ENCODE measurements at regions of chr5 and their contacts with region 1.

Region 1: GRCh38 chr5:150217873-150218692 is 28.2 kb downstream of the SLC6A7 start:
- DNase-seq: peak; percentile 67 to 73 (median 71)
- H3K4me3 ChIP-seq: no peak overlapping the region
- H3K4me3 Mint-ChIP-seq: no peak overlapping the region
- H3K27ac ChIP-seq: no peak overlapping the region
- H3K27ac Mint-ChIP-seq: no peak overlapping the region
- H3K4me1 ChIP-seq: no peaks in the 10 kb centered on the region
- H3K4me1 Mint-ChIP-seq: peaks cover 0 to 5% (median under 1%) of the 10 kb centered on the region in 4 donors
- H3K27me3 ChIP-seq: no peaks in the 10 kb centered on the region
- H3K27me3 Mint-ChIP-seq: peaks cover 0 to 4% of the 10 kb centered on the region in 2 donors

Region 2: GRCh38 chr5:150129813-150130492 is 88.1 kb before region 1 on chr5:
- CTCF ChIA-PET with region 1: interaction called, 3 read pairs
- POLR2A ChIA-PET with region 1: no interaction called
- intact Hi-C with region 1: loop called (anchors 1 kb)
- DNase-seq: peak in 4 of 5 donors; percentile 6 to 25 (median 9)
- H3K4me3 ChIP-seq: no peak overlapping the region
- H3K4me3 Mint-ChIP-seq: no peak overlapping the region
- H3K27ac ChIP-seq: no peak overlapping the region
- H3K27ac Mint-ChIP-seq: peak overlapping the region in 1 of 7 donors; percentile 21
- H3K4me1 ChIP-seq: no peaks in the 10 kb centered on the region
- H3K4me1 Mint-ChIP-seq: no peaks in the 10 kb centered on the region
- H3K27me3 ChIP-seq: no peaks in the 10 kb centered on the region
- H3K27me3 Mint-ChIP-seq: peaks cover under 1 to 2% of the 10 kb centered on the region in 2 donors

Region 3: DNA sequence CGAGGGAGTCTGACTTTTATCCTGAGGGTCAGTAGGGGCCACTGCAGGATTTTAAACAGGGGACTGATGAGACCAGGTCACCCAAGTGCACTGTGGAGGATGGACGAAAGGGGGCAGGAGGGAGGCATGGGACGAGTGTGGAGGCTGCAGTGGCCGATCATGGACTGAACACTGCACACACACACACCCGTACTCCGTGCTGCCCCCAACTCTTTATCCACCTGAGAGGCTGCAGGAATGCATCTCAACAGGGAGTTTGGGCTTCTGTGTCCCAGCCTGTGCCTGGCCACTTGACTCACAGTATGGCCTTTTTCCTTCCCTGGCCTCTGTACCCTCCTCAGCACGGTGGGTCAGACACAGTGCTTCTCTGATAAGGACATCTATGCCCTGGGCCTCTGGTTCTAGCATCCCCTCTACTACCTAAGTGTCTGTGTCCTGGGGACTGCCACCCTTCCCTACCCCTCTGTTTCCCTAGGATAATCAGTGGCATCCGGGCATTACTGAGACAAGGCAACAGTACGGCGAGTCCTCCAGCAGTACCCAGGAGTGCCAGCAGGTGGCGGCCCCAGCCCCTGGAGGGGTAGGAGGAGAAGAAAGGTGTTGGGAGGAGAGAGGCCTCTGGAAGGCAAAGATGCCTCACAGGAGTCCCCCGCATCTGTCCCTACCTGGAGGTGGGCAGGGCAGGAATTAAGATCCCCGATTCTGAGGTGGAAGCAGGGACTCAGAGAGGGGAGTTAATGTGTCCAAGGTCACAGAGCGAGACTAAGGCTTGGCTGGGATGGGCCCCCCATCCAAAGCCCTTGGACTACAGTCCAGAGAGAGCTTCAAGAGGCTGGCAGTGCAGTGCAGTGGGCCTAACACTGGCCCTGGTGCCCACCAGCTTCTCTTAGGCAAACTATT is 56.6 kb before region 1 on chr5:
- CTCF ChIA-PET with region 1: interaction called, 12 read pairs
- POLR2A ChIA-PET with region 1: no interaction called
- intact Hi-C with region 1: loop called (anchors 1 kb)
- DNase-seq: peak; percentile 51 to 64 (median 54)
- H3K4me3 ChIP-seq: no peak overlapping the region
- H3K4me3 Mint-ChIP-seq: no peak overlapping the region
- H3K27ac ChIP-seq: no peak overlapping the region
- H3K27ac Mint-ChIP-seq: no peak overlapping the region
- H3K4me1 ChIP-seq: no peaks in the 10 kb centered on the region
- H3K4me1 Mint-ChIP-seq: peaks cover 0 to 2% (median 1%) of the 10 kb centered on the region in 4 donors
- H3K27me3 ChIP-seq: no peaks in the 10 kb centered on the region
- H3K27me3 Mint-ChIP-seq: peaks cover 19 to 21% of the 10 kb centered on the region in 2 donors

Region 4: GRCh38 chr5:150339165-150339564 is 121.1 kb after region 1 on chr5:
- CTCF ChIA-PET with region 1: no interaction called
- POLR2A ChIA-PET with region 1: no interaction called
- intact Hi-C with region 1: no loop called
- DNase-seq: no peak
- H3K4me3 ChIP-seq: no peak overlapping the region
- H3K4me3 Mint-ChIP-seq: no peak overlapping the region
- H3K27ac ChIP-seq: no peak overlapping the region
- H3K27ac Mint-ChIP-seq: no peak overlapping the region
- H3K4me1 ChIP-seq: no peaks in the 10 kb centered on the region
- H3K4me1 Mint-ChIP-seq: peaks cover 0 to 6% (median 2%) of the 10 kb centered on the region in 4 donors
- H3K27me3 ChIP-seq: no peaks in the 10 kb centered on the region
- H3K27me3 Mint-ChIP-seq: no peaks in the 10 kb centered on the region

Region 5: GRCh38 chr5:150778517-150779396 is 560.7 kb after region 1 on chr5 and contains the start of gene SMIM3:
- CTCF ChIA-PET with region 1: no interaction called
- POLR2A ChIA-PET with region 1: no interaction called
- intact Hi-C with region 1: no loop called
- DNase-seq: peak; percentile 59 to 70 (median 65)
- H3K4me3 ChIP-seq: peak within 1 kb of the TSS; percentile 67 to 77
- H3K4me3 Mint-ChIP-seq: peak within 1 kb of the TSS; percentile 97 to 99 (median 98)
- H3K27ac ChIP-seq: peak within 1 kb of the TSS; percentile 60
- H3K27ac Mint-ChIP-seq: peak within 1 kb of the TSS; percentile 93 to 99 (median 96)
- H3K4me1 ChIP-seq: peaks cover 52% of the 10 kb centered on the region
- H3K4me1 Mint-ChIP-seq: peaks cover 36 to 61% (median 52%) of the 10 kb centered on the region in 4 donors
- H3K27me3 ChIP-seq: no peaks in the 10 kb centered on the region
- H3K27me3 Mint-ChIP-seq: no peaks in the 10 kb centered on the region
- total RNA-seq, gene SMIM3: 7.9 to 8.0 TPM